ENCODE measurements at regions of chr5 and their contacts with region 1.

Region 1: DNA sequence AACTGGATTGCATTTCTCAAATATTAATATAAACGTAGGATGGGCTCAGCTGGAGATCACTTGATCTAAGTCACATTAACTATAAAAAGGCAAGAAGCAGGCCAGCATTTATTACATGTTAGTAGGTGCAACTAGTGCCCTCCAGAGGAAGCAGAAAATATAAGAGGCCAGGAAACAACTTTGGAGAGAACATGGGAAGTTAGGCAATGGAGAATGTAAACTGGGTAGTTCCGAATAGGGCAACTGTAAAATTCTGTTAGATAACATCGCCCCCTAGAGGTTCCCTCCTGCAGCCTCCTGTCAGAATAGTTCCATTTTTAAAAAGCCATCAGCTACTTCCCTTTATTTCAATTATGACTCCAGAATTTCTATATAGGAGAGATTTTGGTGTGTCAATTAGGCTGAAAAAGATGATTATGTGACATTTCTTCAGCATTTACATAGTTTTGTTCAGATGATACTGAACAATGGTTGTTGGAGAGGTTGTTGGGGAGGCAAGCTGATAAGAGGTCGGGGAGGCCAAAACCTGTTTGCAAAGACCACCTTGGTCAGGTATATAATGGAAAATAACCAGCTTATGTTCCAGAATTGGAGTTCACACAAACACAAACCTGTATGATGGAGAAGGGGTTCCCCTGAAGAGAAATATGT is 22.4 kb downstream of the CCL28 start:
- DNase-seq: peak; percentile 76
- H3K4me3 ChIP-seq: peak overlapping the region in 1 of 2 experiments; percentile 3; a peak in 1 of 4 replicates
- H3K27ac ChIP-seq: no peak overlapping the region
- H3K4me1 ChIP-seq: no peaks in the 10 kb centered on the region
- H3K27me3 ChIP-seq: peaks cover 13% of the 10 kb centered on the region
- CTCF ChIP-seq: peak; percentile 90
- EP300 ChIP-seq: no peak
- RAD21 ChIP-seq: peak; percentile 85

Region 2: DNA sequence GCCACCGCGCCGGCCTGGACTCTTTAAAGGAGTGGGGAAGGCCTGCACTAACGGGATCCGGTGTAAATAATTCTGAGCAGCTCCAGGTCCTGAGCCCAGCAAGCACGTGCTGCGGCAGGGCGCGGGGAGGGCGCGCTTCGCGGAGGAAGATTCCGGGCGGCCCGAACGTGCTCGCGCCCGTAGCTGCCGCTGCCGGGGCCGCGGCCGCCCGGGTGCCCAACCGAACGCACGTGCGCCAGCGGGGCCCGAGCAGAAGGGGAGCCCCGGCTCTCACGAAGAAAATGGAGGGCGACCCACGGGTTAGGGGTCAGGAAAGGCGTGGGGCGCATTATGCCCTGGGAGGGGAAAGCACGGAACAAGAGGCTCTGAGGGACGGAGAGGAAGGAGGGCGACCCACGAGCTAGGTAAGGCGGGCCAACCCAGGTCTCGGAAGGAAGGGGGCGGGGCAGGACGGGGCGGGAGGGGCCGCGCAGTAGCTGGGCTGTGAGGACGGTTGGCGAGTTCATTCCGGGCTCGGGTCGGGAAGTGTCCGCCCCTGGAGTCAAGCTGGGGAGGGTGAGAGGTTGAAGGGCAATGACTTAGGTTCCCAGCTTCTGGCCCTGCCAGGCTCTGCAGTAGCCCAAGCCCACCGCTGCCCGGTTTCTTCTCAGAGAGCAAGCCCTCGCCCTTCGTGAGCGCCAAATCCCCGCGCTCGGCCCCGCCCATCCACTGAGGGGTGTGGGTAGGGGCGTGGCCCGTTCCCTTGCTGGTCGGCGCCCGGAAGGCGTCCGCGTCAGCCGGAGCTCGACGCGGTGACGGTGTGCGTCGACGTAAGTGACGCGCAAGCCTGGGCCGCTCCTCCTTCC is 268.9 kb before region 1 on chr5 and contains the start of gene ZNF131:
- CTCF ChIA-PET with region 1: interaction called, 14 read pairs
- POLR2A ChIA-PET with region 1: no interaction called
- DNase-seq: peak; percentile 95
- H3K4me3 ChIP-seq: peak within 1 kb of the TSS; percentile 87 to 99
- H3K27ac ChIP-seq: peak within 1 kb of the TSS; percentile 92 to 96
- H3K4me1 ChIP-seq: peaks cover 15 to 16% of the 10 kb centered on the region in 2 experiments; a peak in 3 of 4 replicates
- H3K27me3 ChIP-seq: no peaks in the 10 kb centered on the region
- CTCF ChIP-seq: no peak
- EP300 ChIP-seq: no peak
- RAD21 ChIP-seq: no peak
- polyA plus RNA-seq, gene ZNF131: 17.2 and 22.9 TPM in 2 replicates

Region 3: DNA sequence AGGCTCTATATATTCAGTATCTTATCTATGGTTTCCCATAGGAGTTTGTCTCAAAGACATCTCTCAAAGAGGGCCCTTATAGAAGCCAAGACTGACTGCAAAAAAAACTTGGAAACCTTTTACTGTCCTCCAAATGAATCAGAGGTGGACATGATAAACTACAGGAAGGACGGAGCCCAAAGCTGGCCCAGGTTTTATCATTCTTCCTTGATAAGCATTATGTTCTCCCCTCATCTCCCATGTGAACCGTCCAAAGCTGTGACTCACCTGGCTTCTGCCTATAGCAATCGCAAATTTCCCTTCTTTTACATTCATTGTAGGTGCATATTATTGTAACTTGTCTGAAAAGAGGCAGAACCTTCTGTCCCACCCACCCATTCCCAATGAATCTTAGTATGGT is 232.7 kb before region 1 on chr5:
- CTCF ChIA-PET with region 1: no interaction called
- POLR2A ChIA-PET with region 1: no interaction called
- DNase-seq: no peak
- H3K4me3 ChIP-seq: no peak overlapping the region
- H3K27ac ChIP-seq: no peak overlapping the region
- H3K4me1 ChIP-seq: peaks cover 4 to 11% of the 10 kb centered on the region in 2 experiments; a peak in 1 of 4 replicates
- H3K27me3 ChIP-seq: no peaks in the 10 kb centered on the region
- CTCF ChIP-seq: no peak
- EP300 ChIP-seq: no peak
- RAD21 ChIP-seq: no peak

Region 4: DNA sequence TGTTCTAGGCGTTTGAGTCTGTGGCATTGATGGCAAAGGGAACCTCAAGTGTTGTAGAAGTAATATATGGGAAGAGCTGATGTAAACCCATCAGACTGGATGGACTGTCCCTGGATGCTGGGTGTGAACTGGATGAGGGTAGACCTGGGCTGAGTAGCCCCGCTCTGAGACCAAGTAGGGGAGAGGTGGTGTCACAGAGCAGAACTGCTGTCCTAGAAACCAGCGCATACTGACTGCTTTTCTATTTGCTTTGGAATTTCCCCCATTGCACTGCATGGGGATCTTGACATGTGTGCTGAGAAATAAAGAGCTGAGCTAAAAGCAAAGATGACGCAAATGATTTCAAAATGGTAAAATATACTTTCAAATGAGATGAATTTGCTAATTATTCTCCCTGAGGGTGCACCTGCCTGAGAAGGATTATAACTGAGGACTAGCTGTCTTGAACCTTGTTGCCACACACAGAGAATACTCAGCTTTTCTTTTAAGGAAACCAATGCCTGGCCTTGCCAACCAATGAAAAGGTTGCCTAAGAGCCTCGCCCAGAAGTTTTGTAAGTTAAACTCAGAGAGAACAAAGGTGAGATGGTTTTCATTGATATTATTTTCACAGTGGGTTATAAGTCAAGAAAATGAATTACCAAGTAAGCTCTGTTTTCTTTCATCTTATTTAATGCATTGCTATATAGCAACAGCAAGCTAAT is 153.0 kb before region 1 on chr5:
- CTCF ChIA-PET with region 1: interaction called, 21 read pairs
- POLR2A ChIA-PET with region 1: no interaction called
- DNase-seq: no peak
- H3K4me3 ChIP-seq: no peak overlapping the region
- H3K27ac ChIP-seq: no peak overlapping the region
- H3K4me1 ChIP-seq: no peaks in the 10 kb centered on the region
- H3K27me3 ChIP-seq: no peaks in the 10 kb centered on the region; the same call in 1 of the 2 replicates
- CTCF ChIP-seq: no peak
- EP300 ChIP-seq: no peak
- RAD21 ChIP-seq: no peak

Region 5: DNA sequence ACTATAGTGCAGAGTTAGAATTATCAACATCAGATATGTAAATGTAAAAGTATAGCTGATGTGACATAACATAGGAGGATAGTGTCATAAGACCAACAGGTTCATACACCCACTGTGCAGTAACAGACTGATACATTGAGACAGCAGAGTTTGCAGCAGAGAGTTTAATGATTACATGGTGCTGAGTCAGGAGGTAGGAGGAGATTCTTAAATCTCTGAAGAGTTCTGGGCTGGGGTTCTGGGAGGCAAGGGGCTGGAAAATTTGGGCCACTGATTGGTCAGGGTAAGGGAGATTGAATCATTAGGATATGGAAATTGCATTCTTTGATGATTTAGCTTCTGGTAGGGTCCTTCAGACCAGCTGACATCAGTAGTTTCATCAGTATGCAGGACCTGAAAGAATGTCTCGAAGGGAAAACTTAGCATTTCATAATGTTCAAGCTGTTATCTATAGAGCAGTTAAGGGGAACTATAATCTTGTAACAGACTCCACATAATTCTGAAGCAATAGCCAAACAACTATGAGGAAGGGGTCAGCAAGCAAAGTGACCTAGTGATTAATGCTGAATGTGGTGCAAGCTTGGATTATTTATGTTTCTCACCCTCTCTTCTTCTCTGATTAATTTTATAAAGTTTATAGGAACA is 13.2 kb before region 1 on chr5:
- CTCF ChIA-PET with region 1: interaction called, 14 read pairs
- POLR2A ChIA-PET with region 1: no interaction called
- DNase-seq: no peak
- H3K4me3 ChIP-seq: no peak overlapping the region
- H3K27ac ChIP-seq: no peak overlapping the region
- H3K4me1 ChIP-seq: no peaks in the 10 kb centered on the region
- H3K27me3 ChIP-seq: no peaks in the 10 kb centered on the region; the same call in 1 of the 2 replicates
- CTCF ChIP-seq: no peak
- EP300 ChIP-seq: no peak
- RAD21 ChIP-seq: no peak